Activated naive CD4-positive, alpha-beta T cell treated with anti-CD3 and anti-CD28 coated beads for 36 hours (primary cell): ENCODE measurements at regions of chrX and their contacts with region 1.

Region 1: DNA sequence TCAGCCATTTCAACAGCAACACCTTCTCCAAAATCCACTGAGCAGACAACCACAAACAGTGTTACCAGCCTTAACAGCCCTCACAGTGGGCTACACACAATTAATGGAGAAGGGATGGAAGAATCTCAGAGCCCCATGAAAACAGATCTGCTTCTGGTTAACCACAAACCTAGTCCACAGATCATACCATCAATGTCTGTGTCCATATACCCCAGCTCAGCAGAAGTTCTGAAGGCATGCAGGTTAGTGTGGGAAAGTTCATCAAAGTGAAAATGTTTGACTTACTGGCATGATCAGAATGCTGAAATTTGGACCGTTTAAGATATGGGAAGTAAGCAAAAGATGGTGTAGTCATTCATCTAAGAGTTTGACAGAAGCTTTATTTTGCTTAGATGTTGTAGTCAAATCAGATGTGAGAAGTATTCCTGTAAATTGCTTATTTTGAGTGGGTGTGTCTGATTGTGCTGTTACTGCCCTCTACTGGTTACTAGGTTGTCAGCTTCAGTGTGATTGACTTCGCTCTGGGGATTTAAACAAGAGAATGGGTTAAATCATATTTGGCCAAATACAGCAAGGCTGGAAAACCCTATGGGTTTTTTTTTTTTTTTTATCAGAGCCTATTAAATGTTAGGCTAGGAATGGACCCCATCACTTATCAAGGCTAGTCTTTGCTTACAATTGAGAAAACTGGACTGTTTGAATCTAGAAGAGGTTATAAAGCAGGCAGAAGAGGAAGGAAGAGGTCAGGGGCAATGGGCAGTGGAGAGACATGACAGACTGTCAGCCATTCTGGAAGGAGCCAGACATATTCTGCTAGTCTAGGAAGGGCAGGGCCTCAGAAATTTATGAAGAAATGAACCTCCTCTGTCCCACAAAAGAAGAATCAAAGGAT is 130.3 kb downstream of the DIPK2B start:
- DNase-seq: peak; percentile 16
- H3K4me3 Mint-ChIP-seq: peak overlapping the region; percentile 39
- H3K27ac Mint-ChIP-seq: peak overlapping the region; percentile 80
- H3K4me1 Mint-ChIP-seq: peaks cover 54% of the 10 kb centered on the region
- H3K27me3 Mint-ChIP-seq: no peaks in the 10 kb centered on the region

Region 2: GRCh38 chrX:44253575-44253942 is 816.8 kb before region 1 on chrX:
- CTCF ChIA-PET with region 1: no interaction called
- intact Hi-C with region 1: loop called (anchors 10 kb)
- DNase-seq: no peak
- H3K4me3 Mint-ChIP-seq: no peak overlapping the region
- H3K27ac Mint-ChIP-seq: peak overlapping the region; percentile 72
- H3K4me1 Mint-ChIP-seq: peaks cover 21% of the 10 kb centered on the region
- H3K27me3 Mint-ChIP-seq: no peaks in the 10 kb centered on the region

Region 3: DNA sequence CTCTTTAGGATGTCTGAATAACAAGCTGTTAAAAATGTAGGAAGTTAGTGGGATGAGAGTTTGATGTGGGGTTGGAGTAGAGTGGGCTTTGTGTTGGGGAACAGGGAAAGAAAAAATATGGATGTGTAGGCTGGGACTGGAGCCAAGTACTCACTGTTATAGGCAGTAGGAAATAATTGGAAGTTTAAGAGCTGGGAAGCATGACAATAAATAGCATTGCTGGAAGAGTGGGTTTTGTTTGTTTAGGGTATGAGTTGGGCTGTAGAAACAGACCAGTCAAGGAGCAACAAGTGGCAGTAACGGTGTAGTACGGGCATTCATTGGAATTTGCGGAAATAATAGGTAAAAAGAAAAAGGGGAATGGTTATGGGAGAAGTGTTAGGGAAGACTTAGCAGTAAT is 115.8 kb before region 1 on chrX:
- CTCF ChIA-PET with region 1: no interaction called
- intact Hi-C with region 1: no loop called
- DNase-seq: no peak
- H3K4me3 Mint-ChIP-seq: no peak overlapping the region
- H3K27ac Mint-ChIP-seq: peak overlapping the region; percentile 59
- H3K4me1 Mint-ChIP-seq: peaks cover 45% of the 10 kb centered on the region
- H3K27me3 Mint-ChIP-seq: no peaks in the 10 kb centered on the region

Region 4: GRCh38 chrX:44980883-44981282 is 89.5 kb before region 1 on chrX:
- CTCF ChIA-PET with region 1: no interaction called
- intact Hi-C with region 1: no loop called
- DNase-seq: no peak
- H3K4me3 Mint-ChIP-seq: no peak overlapping the region
- H3K27ac Mint-ChIP-seq: no peak overlapping the region
- H3K4me1 Mint-ChIP-seq: peaks cover 8% of the 10 kb centered on the region
- H3K27me3 Mint-ChIP-seq: no peaks in the 10 kb centered on the region

Region 5: DNA sequence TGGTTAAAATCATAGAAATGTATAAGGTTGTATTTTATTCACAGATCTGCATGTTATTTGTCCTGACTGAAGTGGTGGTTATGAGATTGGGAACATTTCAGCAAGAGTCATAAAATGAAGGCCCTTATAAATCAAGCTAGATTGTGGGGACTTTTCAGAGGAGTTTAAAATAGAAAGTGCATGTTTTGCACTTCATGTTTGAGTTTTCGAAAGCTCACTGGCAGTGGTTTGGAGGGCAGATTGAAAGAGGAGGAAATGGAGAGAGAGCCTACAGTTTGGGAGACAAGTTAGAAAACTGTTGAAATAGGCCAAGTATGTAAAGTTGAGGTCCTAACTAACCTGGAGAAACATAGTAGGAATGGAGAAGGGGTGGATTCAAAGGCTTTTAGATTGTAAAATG is 72.5 kb before region 1 on chrX:
- CTCF ChIA-PET with region 1: no interaction called
- intact Hi-C with region 1: loop called (anchors 5 kb)
- DNase-seq: peak; percentile 8
- H3K4me3 Mint-ChIP-seq: peak overlapping the region; percentile 27
- H3K27ac Mint-ChIP-seq: peak overlapping the region; percentile 78
- H3K4me1 Mint-ChIP-seq: peaks cover 68% of the 10 kb centered on the region
- H3K27me3 Mint-ChIP-seq: no peaks in the 10 kb centered on the region